HEK293 (cell line): ENCODE measurements at regions of chr4 and their contacts with region 1.

Region 1: DNA sequence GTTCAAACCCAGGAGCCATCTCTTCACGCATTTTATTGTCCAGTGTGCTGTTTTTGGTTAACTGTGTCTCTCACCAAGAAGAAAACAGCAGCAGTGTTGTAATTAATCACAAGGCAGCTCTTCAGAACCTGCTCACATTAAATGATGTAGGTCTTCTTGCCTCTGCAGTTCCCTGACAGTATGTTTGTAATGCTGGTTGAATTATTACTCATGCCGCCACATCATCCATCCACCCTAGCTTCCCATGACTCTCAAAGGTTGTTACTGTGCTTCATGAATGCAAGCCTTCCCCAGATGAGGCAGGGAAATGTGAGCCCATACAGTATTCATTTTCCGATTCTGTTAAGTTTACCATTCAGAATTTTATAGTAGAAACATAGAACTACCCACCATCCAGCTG is 17.4 kb downstream of the TLR10 start:
- H3K4me3 ChIP-seq: no peak overlapping the region
- H3K27ac ChIP-seq: no peak overlapping the region
- H3K4me1 ChIP-seq: no peaks in the 10 kb centered on the region
- CTCF ChIP-seq: no peak

Region 2: GRCh38 chr4:37780444-37781150 is 984.8 kb before region 1 on chr4:
- CTCF ChIA-PET with region 1: no interaction called
- POLR2A ChIA-PET with region 1: no interaction called
- H3K4me3 ChIP-seq: no peak overlapping the region
- H3K27ac ChIP-seq: no peak overlapping the region
- H3K4me1 ChIP-seq: no peaks in the 10 kb centered on the region
- CTCF ChIP-seq: no peak

Region 3: DNA sequence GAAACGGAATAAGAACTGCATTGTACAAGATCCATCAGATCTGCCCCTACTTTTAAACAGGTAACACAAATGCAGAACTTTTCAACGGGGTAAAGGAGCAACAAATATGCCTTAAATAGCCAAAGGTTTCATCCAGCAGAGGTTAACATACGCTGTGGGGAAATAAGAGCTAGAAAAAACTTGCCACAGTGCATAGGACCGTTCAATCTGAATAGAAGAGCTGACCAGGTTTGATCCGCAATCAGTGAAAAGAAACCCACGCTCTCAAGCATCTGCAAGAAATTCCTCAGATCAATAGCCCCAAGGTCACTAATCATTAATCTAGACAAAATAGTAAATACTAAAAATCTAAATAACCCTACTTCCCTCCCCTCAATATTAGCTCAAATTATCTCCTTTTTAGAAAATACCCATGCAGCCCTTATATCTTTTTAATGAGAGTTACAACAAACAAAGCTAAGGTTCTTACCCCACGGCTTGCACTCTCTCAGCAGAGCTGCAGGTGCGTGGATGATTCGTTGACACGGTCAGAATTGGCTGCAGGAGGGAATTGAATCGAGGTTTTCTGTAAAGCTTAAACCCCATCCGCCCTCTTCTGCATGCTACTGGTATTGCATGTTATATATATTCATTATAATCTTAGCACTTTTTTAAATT is 17.2 kb after region 1 on chr4 and contains the start of gene TLR10:
- CTCF ChIA-PET with region 1: interaction called, 24 read pairs
- POLR2A ChIA-PET with region 1: no interaction called
- H3K4me3 ChIP-seq: no peak within 1 kb of the TSS
- H3K27ac ChIP-seq: no peak within 1 kb of the TSS
- H3K4me1 ChIP-seq: no peaks in the 10 kb centered on the region
- CTCF ChIP-seq: no peak